Thyroid gland (tissue), 4 donors: ENCODE measurements at regions of chr10 and their contacts with region 1.

Region 1: GRCh38 chr10:60816628-60817397 is 38.5 kb downstream of the CDK1 start:
- DNase-seq: peak; percentile 42 to 43
- H3K4me3 ChIP-seq: no peak overlapping the region
- H3K27ac ChIP-seq: no peak overlapping the region
- H3K4me1 ChIP-seq: peaks cover 0 to 5% of the 10 kb centered on the region in 2 donors
- H3K27me3 ChIP-seq: no peaks in the 10 kb centered on the region
- CTCF ChIP-seq: peak; percentile 48 to 90 (median 78)
- POLR2A ChIP-seq: no peak

Region 2: GRCh38 chr10:60853107-60853506 is 36.3 kb after region 1 on chr10:
- intact Hi-C with region 1: no loop called
- DNase-seq: no peak
- H3K4me3 ChIP-seq: no peak overlapping the region
- H3K27ac ChIP-seq: no peak overlapping the region
- H3K4me1 ChIP-seq: peaks cover 0 to 3% of the 10 kb centered on the region in 2 donors
- H3K27me3 ChIP-seq: no peaks in the 10 kb centered on the region
- CTCF ChIP-seq: no peak
- POLR2A ChIP-seq: no peak

Region 3: GRCh38 chr10:60964257-60965235 is 147.7 kb after region 1 on chr10:
- intact Hi-C with region 1: loop called (anchors 5 kb)
- DNase-seq: peak; percentile 62 to 75
- H3K4me3 ChIP-seq: no peak overlapping the region
- H3K27ac ChIP-seq: no peak overlapping the region
- H3K4me1 ChIP-seq: peaks cover 0 to 6% of the 10 kb centered on the region in 2 donors
- H3K27me3 ChIP-seq: no peaks in the 10 kb centered on the region
- CTCF ChIP-seq: peak; percentile 61 to 81 (median 76)
- POLR2A ChIP-seq: no peak

Region 4: GRCh38 chr10:61284222-61284890 is 467.5 kb after region 1 on chr10:
- intact Hi-C with region 1: loop called (anchors 5 kb)
- DNase-seq: no peak
- H3K4me3 ChIP-seq: no peak overlapping the region
- H3K27ac ChIP-seq: no peak overlapping the region
- H3K4me1 ChIP-seq: no peaks in the 10 kb centered on the region
- H3K27me3 ChIP-seq: no peaks in the 10 kb centered on the region
- CTCF ChIP-seq: peak; percentile 45 to 76 (median 58)
- POLR2A ChIP-seq: no peak

Region 5: GRCh38 chr10:62025901-62026879 is 1209.4 kb after region 1 on chr10:
- intact Hi-C with region 1: no loop called
- DNase-seq: no peak
- H3K4me3 ChIP-seq: no peak overlapping the region
- H3K27ac ChIP-seq: no peak overlapping the region
- H3K4me1 ChIP-seq: no peaks in the 10 kb centered on the region
- H3K27me3 ChIP-seq: no peaks in the 10 kb centered on the region
- CTCF ChIP-seq: no peak
- POLR2A ChIP-seq: no peak